ENCODE measurements at regions of chr4 and their contacts with region 1.

Region 1: DNA sequence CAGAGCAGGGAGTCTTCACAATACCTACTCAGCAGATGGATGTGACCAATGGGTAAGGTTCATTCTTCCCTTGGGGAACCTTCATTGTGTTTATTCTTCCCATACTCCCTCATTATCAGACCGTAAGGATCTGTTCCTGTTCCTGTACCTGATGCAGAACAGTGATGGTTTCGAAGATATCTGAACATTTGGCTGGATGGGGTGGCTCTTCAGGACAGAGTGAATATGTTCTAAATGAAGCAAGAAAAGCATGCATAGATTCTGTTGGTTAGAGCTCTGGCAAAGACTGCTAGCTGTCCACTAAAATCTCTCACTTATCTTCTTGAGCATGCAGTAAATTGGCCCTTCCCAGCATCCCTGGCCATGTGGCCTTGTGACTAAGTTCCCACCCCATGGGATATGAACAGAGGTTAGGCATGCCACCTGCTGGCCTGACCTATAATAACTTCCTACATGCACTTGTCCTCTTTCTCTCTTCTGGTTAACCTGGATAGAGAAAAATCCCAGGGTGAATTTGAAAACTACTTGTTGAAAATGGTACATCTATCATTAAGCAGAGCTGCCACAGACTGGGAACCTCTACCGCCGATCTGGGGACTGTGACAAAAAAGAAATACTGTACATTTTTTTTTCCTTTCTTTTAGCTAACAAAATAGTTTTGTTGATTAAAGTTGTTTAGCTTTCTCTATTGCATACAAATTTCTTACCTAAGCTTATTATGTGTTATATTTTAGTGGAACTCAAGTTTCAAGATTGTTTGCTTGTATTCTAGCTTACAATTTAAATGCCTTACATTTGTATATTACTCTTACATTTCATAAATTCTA is 60.0 kb upstream of the BANK1 start:
- DNase-seq: no peak
- ATAC-seq: peak; percentile 95
- H3K4me3 Mint-ChIP-seq: no peak overlapping the region
- H3K27ac Mint-ChIP-seq: peak overlapping the region; percentile 53
- H3K4me1 Mint-ChIP-seq: peaks cover 22% of the 10 kb centered on the region
- H3K27me3 Mint-ChIP-seq: no peaks in the 10 kb centered on the region
- CTCF ChIP-seq: peak; percentile 32

Region 2: GRCh38 chr4:100421361-100421978 is 1309.0 kb before region 1 on chr4:
- CTCF ChIA-PET with region 1: no interaction called
- POLR2A ChIA-PET with region 1: no interaction called
- intact Hi-C with region 1: loop called (anchors 10 kb)
- DNase-seq: no peak
- ATAC-seq: no peak
- H3K4me3 Mint-ChIP-seq: no peak overlapping the region
- H3K27ac Mint-ChIP-seq: no peak overlapping the region
- H3K4me1 Mint-ChIP-seq: no peaks in the 10 kb centered on the region
- H3K27me3 Mint-ChIP-seq: peaks cover 8% of the 10 kb centered on the region
- CTCF ChIP-seq: no peak

Region 3: GRCh38 chr4:100907465-100908454 is 822.7 kb before region 1 on chr4:
- CTCF ChIA-PET with region 1: no interaction called
- POLR2A ChIA-PET with region 1: no interaction called
- intact Hi-C with region 1: loop called (anchors 10 kb)
- DNase-seq: no peak
- ATAC-seq: no peak
- H3K4me3 Mint-ChIP-seq: no peak overlapping the region
- H3K27ac Mint-ChIP-seq: no peak overlapping the region
- H3K4me1 Mint-ChIP-seq: no peaks in the 10 kb centered on the region
- H3K27me3 Mint-ChIP-seq: no peaks in the 10 kb centered on the region
- CTCF ChIP-seq: no peak

Region 4: GRCh38 chr4:101020956-101021355 is 709.5 kb before region 1 on chr4:
- CTCF ChIA-PET with region 1: no interaction called
- POLR2A ChIA-PET with region 1: no interaction called
- intact Hi-C with region 1: no loop called
- DNase-seq: no peak
- ATAC-seq: peak; percentile 72
- H3K4me3 Mint-ChIP-seq: no peak overlapping the region
- H3K27ac Mint-ChIP-seq: peak overlapping the region; percentile 18
- H3K4me1 Mint-ChIP-seq: peaks cover 36% of the 10 kb centered on the region
- H3K27me3 Mint-ChIP-seq: no peaks in the 10 kb centered on the region
- CTCF ChIP-seq: no peak

Region 5: GRCh38 chr4:101169044-101170014 is 561.2 kb before region 1 on chr4:
- CTCF ChIA-PET with region 1: interaction called, 55 read pairs
- POLR2A ChIA-PET with region 1: no interaction called
- intact Hi-C with region 1: loop called (anchors 1 kb)
- DNase-seq: no peak
- ATAC-seq: peak; percentile 99
- H3K4me3 Mint-ChIP-seq: no peak overlapping the region
- H3K27ac Mint-ChIP-seq: no peak overlapping the region
- H3K4me1 Mint-ChIP-seq: peaks cover 21% of the 10 kb centered on the region
- H3K27me3 Mint-ChIP-seq: no peaks in the 10 kb centered on the region
- CTCF ChIP-seq: no peak

Region 6: DNA sequence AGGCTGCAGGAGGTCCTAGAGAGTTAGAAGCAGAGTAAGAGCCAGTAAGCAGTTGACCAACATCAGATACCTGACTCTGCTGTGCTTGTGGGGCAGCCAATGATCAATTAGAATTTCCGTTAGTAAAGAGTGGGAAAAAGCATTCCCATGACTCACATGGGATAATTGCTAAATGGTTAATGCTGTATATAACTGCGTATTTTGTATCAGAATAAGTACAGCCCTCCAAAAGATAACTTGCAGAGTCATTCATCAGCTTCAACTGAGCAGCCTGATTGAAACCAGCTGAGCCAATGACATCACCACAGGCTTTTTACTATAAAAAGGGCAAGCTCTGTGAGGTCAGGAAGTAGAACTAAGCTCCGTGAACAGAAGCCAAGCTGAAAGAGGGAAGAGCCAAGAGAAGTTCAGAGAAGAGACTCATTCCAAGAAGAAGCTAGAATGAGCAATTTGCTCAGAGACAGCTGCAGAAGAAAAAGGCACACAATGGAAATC is 451.1 kb before region 1 on chr4:
- CTCF ChIA-PET with region 1: interaction called, 3 read pairs
- POLR2A ChIA-PET with region 1: no interaction called
- intact Hi-C with region 1: loop called (anchors 10 kb)
- DNase-seq: no peak
- ATAC-seq: peak; percentile 70
- H3K4me3 Mint-ChIP-seq: peak overlapping the region; percentile 64
- H3K27ac Mint-ChIP-seq: peak overlapping the region; percentile 86
- H3K4me1 Mint-ChIP-seq: peaks cover 82% of the 10 kb centered on the region
- H3K27me3 Mint-ChIP-seq: no peaks in the 10 kb centered on the region
- CTCF ChIP-seq: no peak

Region 7: GRCh38 chr4:101596781-101597552 is 133.5 kb before region 1 on chr4:
- CTCF ChIA-PET with region 1: interaction called, 3 read pairs
- POLR2A ChIA-PET with region 1: no interaction called
- intact Hi-C with region 1: loop called (anchors 5 kb)
- DNase-seq: no peak
- ATAC-seq: peak; percentile 62
- H3K4me3 Mint-ChIP-seq: peak overlapping the region; percentile 7
- H3K27ac Mint-ChIP-seq: peak overlapping the region; percentile 74
- H3K4me1 Mint-ChIP-seq: peaks cover 15% of the 10 kb centered on the region
- H3K27me3 Mint-ChIP-seq: no peaks in the 10 kb centered on the region
- CTCF ChIP-seq: no peak

Region 8: DNA sequence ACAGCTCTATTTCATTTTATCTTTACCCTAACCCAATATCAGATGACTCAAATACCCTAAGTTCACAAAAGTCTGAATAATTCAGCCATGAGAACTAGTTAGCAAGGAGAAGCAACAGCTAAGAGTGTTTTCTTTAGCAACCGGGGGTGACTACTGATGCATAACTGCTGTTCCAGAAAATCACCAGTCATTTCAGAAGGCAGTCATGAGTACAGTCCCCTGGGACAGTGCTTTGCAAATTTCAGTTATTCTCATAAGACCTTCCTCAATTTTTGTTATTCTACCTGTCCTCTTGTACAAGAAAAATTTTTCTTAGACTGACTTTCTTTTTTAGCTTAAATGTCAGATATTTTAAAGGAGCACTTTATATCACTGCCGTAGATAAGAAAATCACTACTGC is 76.4 kb after region 1 on chr4:
- CTCF ChIA-PET with region 1: interaction called, 7 read pairs
- POLR2A ChIA-PET with region 1: no interaction called
- intact Hi-C with region 1: loop called (anchors 5 kb)
- DNase-seq: no peak
- ATAC-seq: peak; percentile 87
- H3K4me3 Mint-ChIP-seq: peak overlapping the region; percentile 73
- H3K27ac Mint-ChIP-seq: peak overlapping the region; percentile 95
- H3K4me1 Mint-ChIP-seq: peaks cover 83% of the 10 kb centered on the region
- H3K27me3 Mint-ChIP-seq: no peaks in the 10 kb centered on the region
- CTCF ChIP-seq: no peak